GM10248 (cell line): ENCODE measurements at regions of chr9 and their contacts with region 1.

Region 1: DNA sequence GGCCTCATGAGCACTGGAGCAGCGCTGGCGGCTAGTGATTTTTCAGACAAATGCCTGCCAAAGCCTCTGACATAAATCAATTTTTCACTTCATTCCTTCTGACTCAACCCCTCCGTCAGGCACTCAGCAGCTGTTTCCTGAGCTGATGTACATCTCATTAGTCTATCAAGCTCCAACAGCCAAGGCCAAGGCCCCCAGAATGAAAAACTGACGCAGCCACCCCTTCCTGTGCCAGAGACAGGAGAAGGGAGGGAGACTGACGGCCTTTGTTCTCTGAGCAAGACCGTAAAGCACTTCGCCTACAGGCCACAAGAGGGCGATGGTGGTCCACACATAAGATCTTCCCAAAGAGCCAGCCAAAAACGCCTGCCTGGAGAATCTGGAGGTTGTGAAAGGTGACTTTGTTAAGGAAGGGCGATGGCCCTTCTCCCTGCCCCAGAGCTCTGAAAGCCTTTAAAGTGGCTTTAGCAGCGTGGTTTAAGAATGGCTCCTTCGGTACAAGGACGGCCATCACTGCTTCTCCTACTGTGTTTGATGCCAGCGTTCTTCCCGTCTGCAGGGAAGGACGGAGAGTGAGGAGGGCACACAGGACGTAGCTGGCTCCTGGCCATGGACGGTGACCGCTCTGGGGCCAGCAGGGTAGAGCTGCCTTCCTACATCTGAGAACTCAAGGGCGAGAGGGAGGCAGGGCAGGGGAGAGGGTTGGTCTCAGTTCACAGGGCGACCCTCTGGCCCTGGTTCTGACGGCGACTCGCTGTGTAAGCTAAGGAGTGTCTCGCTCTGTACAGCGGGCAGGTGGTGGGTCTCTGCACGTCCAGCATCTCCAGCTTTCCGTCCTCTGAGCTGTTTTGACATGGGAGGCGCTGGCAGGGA is 37.0 kb downstream of the ALG2 start:
- DNase-seq: peak; percentile 78
- CTCF ChIP-seq: peak; percentile 93

Region 2: GRCh38 chr9:99162759-99163364 is 21.8 kb before region 1 on chr9:
- CTCF ChIA-PET with region 1: interaction called, 40 read pairs
- POLR2A ChIA-PET with region 1: interaction called, 3 read pairs
- DNase-seq: peak; percentile 58
- CTCF ChIP-seq: peak; percentile 66

Region 3: DNA sequence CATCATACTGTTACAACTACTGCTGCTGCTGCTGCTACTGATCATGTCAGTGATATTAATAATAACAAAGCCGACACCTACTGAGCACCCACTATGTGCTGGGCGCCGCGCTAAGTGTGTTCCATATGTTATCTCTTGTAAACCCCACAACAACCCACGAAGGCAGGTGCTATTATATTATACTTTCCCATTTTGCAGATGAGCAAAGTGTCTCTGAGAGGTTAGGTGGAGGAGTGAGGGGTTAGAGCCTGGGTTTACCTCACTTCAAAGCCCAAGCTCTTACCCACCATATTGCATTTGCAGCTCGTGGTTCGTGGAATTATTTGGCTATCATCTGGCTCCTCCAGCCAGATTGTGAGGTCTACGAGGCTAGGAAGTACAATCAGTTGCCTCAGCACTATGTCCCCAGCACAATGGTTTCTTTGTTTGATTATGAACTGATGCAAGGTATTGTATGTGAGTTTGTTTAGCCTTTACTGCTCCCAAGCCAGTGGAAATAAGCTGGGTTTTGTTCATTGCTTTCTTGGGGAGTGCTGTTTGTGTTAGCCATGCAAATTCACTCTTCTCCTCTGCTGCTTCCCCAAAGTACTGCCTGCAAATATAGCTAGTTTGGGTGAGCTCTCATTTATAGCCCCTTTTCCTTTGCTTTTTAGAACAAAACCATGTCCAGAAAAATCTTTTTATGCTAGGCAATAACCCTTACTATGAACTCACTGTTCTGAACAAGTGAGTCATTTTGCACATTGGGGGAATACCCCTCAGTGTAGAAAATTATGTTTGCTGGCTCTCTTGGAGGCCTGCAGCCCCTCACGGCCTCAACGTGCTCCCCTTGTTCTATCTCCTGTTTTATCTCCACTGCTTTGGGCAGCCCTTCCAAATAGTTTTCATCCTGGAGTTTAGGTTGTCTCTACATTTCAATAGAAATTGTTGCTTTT is 10.9 kb before region 1 on chr9:
- CTCF ChIA-PET with region 1: interaction called, 46 read pairs
- POLR2A ChIA-PET with region 1: no interaction called
- DNase-seq: peak; percentile 48
- CTCF ChIP-seq: no peak

Region 4: GRCh38 chr9:99211741-99212140 is 27.0 kb after region 1 on chr9:
- CTCF ChIA-PET with region 1: interaction called, 76 read pairs
- POLR2A ChIA-PET with region 1: no interaction called
- DNase-seq: no peak
- CTCF ChIP-seq: no peak

Region 5: GRCh38 chr9:99221621-99222415 is 37.1 kb after region 1 on chr9 and contains the starts of genes ALG2 and SEC61B:
- CTCF ChIA-PET with region 1: interaction called, 76 read pairs
- POLR2A ChIA-PET with region 1: interaction called, 3 read pairs
- DNase-seq: peak; percentile 96
- CTCF ChIP-seq: no peak

Region 6: DNA sequence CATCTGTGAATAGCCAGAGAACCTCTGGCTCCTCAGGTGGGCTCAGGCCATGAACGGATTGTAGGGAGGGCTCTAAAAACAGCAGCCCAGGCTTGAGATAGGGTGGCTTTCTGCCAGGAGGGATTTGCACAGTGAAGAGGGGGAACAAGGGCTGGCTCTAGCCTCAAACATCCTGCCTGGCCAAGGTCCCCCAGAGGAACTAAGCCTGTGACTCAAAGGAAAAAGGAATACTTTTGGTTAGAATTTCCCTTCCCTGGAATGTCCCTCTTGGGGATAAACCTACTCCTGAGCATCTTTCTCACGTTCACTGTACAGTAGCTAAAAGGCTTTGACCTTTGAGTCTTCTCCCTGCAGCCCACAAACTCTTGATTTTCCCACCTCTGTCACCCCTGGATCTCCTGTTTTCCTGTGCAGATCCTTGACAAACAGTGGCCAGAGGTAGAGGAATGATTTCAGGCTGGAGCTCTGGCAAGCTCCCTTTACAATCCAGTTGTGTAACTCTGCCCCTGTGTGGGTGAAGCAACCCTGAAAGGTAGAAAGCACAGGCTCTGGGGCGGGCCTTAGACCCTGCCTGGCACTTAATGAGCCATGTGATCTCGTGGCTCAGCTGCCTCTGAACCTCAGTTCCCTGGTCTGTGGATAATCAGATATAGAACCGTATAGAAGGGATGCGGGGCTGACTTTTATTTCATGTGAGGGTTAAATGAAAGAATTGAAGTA is 54.8 kb after region 1 on chr9:
- CTCF ChIA-PET with region 1: interaction called, 86 read pairs
- POLR2A ChIA-PET with region 1: no interaction called
- DNase-seq: no peak
- CTCF ChIP-seq: no peak

Region 7: GRCh38 chr9:100322954-100323536 is 1138.3 kb after region 1 on chr9:
- CTCF ChIA-PET with region 1: interaction called, 20 read pairs
- POLR2A ChIA-PET with region 1: no interaction called
- DNase-seq: peak; percentile 13
- CTCF ChIP-seq: peak; percentile 58